Caco-2 (cell line): ENCODE measurements at regions of chr3 and their contacts with region 1.

Region 1: DNA sequence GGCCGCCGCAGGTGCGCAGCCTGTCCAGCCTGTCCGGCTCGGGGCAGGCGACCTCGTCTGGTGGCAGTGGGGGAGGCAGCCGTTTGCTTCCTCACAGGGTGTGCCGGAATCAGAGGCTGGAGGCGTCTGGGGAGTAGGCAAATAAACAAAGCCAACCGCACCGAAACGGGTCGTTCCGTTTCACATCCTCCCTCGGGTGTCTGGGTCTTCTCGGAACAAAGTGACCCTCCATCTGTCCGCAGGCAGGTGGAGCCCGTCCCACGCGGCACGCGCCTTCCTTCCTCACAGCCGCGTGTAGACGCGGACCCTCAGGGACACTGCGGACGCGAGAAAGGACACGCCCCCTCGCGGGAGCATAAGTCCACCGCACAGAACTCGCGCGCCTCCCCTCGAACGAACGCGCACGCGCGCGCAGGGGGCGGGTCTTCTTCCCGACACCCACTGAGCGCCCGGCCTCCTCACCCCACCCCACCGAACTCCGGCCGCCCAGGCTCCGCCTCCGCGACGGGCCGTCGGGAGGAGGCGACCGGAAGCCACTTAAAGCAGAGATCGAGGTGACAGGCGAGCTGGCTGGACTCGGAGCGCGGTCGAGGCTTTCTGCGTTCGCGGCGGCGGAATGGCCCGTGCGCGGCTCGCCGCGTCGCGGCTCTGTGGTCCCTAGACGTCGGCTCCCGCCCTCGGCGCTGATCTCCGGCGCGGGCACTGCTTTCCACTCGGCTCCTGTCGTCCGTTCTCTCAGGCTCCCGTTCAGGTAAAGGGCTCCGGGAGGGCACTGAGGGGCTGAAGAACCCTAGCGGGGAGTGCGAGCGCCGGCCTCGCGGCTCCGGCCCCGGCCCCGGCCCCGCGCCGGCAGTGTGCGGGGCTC is at the start of gene TIPARP:
- DNase-seq: peak; percentile 98 to 99
- H3K4me3 ChIP-seq: peak within 1 kb of the TSS; percentile 84
- H3K4me3 Mint-ChIP-seq: peak within 1 kb of the TSS; percentile 97
- H3K27ac Mint-ChIP-seq: peak within 1 kb of the TSS; percentile 95
- H3K4me1 ChIP-seq: 0 out of 2 replicates have a peak, but pooled peaks cover 8% of the 10 kb centered on the region
- H3K4me1 Mint-ChIP-seq: no peaks in the 10 kb centered on the region
- H3K27me3 ChIP-seq: no peaks in the 10 kb centered on the region
- H3K27me3 Mint-ChIP-seq: no peaks in the 10 kb centered on the region
- CTCF ChIP-seq: peak; percentile 58 to 78
- total RNA-seq, gene TIPARP: 15.8 and 18.2 TPM in 2 replicates

Region 2: GRCh38 chr3:156554842-156555687 is 119.2 kb before region 1 on chr3 and contains the start of gene SSR3:
- CTCF ChIA-PET with region 1: interaction called, 10 read pairs
- POLR2A ChIA-PET with region 1: interaction called, 13 read pairs
- intact Hi-C with region 1: loop called (anchors 1 kb)
- DNase-seq: peak; percentile 99
- H3K4me3 ChIP-seq: peak within 1 kb of the TSS; percentile 99
- H3K4me3 Mint-ChIP-seq: peak within 1 kb of the TSS; percentile 88
- H3K27ac Mint-ChIP-seq: peak within 1 kb of the TSS; percentile 81
- H3K4me1 ChIP-seq: peaks cover 19% of the 10 kb centered on the region; the same call in 1 of the 2 replicates
- H3K4me1 Mint-ChIP-seq: peaks cover 22% of the 10 kb centered on the region
- H3K27me3 ChIP-seq: no peaks in the 10 kb centered on the region
- H3K27me3 Mint-ChIP-seq: no peaks in the 10 kb centered on the region
- CTCF ChIP-seq: no peak
- total RNA-seq, gene SSR3: 177 and 186 TPM in 2 replicates

Region 3: GRCh38 chr3:156605686-156606605 is 68.3 kb before region 1 on chr3:
- CTCF ChIA-PET with region 1: no interaction called
- POLR2A ChIA-PET with region 1: interaction called, 3 read pairs
- intact Hi-C with region 1: loop called (anchors 5 kb)
- DNase-seq: peak; percentile 37 to 57
- H3K4me3 ChIP-seq: peak overlapping the region; percentile 47
- H3K4me3 Mint-ChIP-seq: peak overlapping the region; percentile 80
- H3K27ac Mint-ChIP-seq: peak overlapping the region; percentile 43
- H3K4me1 ChIP-seq: peaks cover 15% of the 10 kb centered on the region
- H3K4me1 Mint-ChIP-seq: peaks cover 6% of the 10 kb centered on the region
- H3K27me3 ChIP-seq: no peaks in the 10 kb centered on the region
- H3K27me3 Mint-ChIP-seq: no peaks in the 10 kb centered on the region
- CTCF ChIP-seq: no peak

Region 4: DNA sequence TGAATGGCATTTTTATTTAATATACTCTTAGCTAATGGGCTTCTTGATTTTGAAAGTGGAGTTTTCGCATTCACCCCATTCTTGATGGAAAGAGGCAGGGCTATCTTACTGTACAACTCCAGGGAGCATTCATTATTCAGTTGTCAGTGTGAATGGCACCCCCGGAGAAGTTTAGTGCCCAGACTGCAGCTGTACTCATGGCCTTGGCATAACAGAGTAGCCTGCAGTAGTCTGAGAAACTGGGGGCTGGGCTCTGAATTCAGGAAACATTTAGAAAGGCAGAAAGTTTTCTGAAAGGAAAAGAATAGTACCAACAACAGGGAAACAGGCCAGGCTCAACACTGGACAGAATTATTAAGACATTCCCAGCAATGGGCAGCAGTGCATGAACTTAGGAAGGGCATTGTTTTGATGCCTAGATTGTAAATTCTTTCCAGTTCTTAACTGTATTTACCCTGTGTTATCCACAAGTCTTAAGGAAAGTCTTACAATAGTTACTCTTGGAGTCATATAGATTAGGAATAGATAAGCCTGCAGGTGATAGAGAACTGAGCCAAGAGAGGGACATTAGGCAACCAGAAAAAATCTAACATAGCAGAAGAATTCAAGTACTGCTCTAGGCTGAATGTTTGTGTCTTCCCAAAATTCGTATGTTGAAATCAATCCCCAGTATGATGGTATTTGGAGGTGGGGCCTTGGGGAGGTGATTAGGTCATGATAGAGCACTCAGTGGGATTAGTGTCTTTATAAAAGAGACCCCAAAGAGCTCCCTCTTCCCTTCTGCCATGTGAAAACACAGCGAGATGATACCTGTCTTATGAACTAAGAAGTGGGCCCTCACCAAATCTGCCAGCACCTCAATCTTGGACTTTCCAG is 44.6 kb after region 1 on chr3:
- CTCF ChIA-PET with region 1: no interaction called
- POLR2A ChIA-PET with region 1: no interaction called
- intact Hi-C with region 1: loop called (anchors 2 kb)
- DNase-seq: peak in 1 of 2 experiments; percentile 35
- H3K4me3 ChIP-seq: no peak overlapping the region
- H3K4me3 Mint-ChIP-seq: no peak overlapping the region
- H3K27ac Mint-ChIP-seq: peak overlapping the region; percentile 36
- H3K4me1 ChIP-seq: peaks cover 20% of the 10 kb centered on the region
- H3K4me1 Mint-ChIP-seq: peaks cover 26% of the 10 kb centered on the region
- H3K27me3 ChIP-seq: no peaks in the 10 kb centered on the region
- H3K27me3 Mint-ChIP-seq: no peaks in the 10 kb centered on the region
- CTCF ChIP-seq: no peak

Region 5: GRCh38 chr3:157081681-157082210 is 407.5 kb after region 1 on chr3:
- CTCF ChIA-PET with region 1: interaction called, 4 read pairs
- POLR2A ChIA-PET with region 1: no interaction called
- intact Hi-C with region 1: loop called (anchors 1 kb)
- DNase-seq: peak; percentile 85 to 91
- H3K4me3 ChIP-seq: no peak overlapping the region
- H3K4me3 Mint-ChIP-seq: no peak overlapping the region
- H3K27ac Mint-ChIP-seq: peak overlapping the region; percentile 66
- H3K4me1 ChIP-seq: peaks cover 6% of the 10 kb centered on the region
- H3K4me1 Mint-ChIP-seq: peaks cover 11% of the 10 kb centered on the region
- H3K27me3 ChIP-seq: no peaks in the 10 kb centered on the region
- H3K27me3 Mint-ChIP-seq: no peaks in the 10 kb centered on the region
- CTCF ChIP-seq: peak; percentile 94

Region 6: DNA sequence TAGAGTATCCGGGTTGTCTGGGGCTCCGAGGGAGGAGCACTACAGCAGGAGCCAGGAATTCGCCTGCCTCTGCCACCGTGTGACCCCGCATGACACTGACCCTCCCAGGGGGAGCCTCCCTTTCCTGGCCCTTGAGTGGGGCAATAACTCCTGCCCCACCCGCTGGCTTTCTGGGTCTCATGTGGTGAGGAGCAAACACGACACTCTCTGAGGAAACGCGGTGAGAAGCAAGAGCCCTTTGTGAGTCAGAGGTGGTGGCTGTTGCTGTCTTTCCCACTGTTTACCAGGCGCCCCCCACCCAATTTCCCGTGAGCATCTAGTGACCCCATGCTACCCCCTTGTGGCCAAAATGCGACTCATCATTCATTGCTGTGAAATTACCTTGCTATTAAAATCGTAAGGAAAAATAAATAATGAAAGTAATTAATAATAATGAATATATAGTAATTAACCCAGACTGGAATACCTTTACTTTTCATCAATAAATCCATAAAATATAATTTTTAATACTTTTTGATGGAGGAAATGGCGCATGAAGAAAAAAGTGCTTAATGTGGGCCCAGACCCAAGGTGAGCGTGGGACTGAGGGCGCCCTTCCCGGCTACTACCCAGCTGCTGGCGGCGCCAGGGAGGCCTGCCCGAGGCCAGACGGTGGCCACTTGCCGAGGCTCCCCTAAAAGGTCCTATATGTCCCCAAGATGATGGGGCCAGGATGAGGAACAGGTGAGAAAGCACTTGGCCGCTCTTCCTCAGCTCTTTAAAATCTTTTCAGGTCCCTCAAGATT is 456.4 kb after region 1 on chr3:
- CTCF ChIA-PET with region 1: no interaction called
- POLR2A ChIA-PET with region 1: no interaction called
- intact Hi-C with region 1: loop called (anchors 1 kb)
- DNase-seq: peak; percentile 89 to 94
- H3K4me3 ChIP-seq: peak overlapping the region; percentile 13
- H3K4me3 Mint-ChIP-seq: peak overlapping the region; percentile 64
- H3K27ac Mint-ChIP-seq: peak overlapping the region; percentile 95
- H3K4me1 ChIP-seq: peaks cover 64% of the 10 kb centered on the region
- H3K4me1 Mint-ChIP-seq: peaks cover 33% of the 10 kb centered on the region
- H3K27me3 ChIP-seq: no peaks in the 10 kb centered on the region
- H3K27me3 Mint-ChIP-seq: no peaks in the 10 kb centered on the region
- CTCF ChIP-seq: peak; percentile 55 to 76